AG04450 (cell line): ENCODE measurements at regions of chr10 and their contacts with region 1.

Region 1: DNA sequence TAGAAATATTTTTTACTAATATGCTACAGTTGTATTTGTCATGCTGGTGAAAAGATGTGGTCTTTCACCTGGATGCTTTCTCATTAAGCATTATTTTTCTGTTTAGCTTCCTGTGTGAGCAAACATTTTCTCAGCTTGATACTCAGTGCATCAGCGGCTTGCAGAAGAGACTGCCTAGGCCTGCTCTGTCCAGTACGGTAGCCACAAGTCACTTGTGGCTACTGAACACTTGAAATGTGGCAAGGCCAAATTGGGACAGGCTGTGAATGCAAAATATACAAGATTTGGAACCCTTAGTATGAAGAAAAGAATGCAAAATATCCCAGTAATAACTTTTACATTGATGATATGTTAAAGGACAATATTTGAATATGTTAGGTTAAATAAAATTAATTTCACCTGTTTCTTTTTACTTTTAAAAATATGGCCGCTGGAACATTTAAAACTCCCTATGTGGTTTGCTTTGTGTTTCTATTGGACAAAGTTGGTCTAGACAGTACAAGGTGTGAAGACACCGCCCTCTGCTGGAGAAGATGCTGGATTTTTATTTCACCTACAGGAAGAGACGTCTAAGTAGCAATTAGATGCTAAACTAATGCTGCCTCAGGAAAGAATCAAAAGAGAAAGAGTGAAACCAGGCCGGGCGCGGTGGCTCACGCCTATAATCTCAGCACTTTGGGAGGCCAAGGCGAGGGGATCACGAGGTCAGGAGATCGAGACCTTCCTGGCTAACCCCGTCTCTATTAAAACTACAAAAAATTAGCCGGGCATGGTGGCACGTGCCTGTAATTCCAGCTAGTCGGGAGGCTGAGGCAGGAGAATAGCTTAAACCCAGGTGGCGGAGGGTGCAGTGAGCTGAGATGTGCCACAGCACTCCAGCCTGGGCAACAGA is 5.3 kb downstream of the SRGN start:
- DNase-seq: peak; percentile 68
- H3K4me3 ChIP-seq: no peak overlapping the region
- H3K27ac ChIP-seq: no peak overlapping the region
- H3K27me3 ChIP-seq: no peaks in the 10 kb centered on the region
- CTCF ChIP-seq: peak; percentile 74

Region 2: DNA sequence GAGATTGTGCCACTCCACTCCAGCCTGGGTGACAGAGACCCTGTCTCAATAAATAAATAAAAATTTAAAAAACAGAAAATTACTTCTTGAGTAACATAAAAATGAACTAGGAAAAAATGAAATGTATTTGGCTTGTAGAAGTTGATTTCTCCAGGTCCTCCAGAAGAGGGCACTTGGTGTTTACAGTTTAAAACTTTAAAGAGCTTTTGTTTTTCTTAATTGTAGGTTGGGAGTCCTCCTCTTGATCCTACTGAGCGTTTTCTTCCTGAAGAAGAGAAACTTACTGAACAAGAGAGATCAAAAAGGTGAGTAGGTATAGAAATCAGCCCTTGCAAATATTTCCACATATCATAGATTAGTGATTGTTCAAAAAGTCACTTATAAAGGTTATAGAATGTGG is 88.4 kb before region 1 on chr10:
- CTCF ChIA-PET with region 1: interaction called, 138 read pairs
- POLR2A ChIA-PET with region 1: no interaction called
- DNase-seq: peak; percentile 24
- H3K4me3 ChIP-seq: no peak overlapping the region
- H3K27ac ChIP-seq: no peak overlapping the region
- H3K27me3 ChIP-seq: no peaks in the 10 kb centered on the region
- CTCF ChIP-seq: peak; percentile 63

Region 3: DNA sequence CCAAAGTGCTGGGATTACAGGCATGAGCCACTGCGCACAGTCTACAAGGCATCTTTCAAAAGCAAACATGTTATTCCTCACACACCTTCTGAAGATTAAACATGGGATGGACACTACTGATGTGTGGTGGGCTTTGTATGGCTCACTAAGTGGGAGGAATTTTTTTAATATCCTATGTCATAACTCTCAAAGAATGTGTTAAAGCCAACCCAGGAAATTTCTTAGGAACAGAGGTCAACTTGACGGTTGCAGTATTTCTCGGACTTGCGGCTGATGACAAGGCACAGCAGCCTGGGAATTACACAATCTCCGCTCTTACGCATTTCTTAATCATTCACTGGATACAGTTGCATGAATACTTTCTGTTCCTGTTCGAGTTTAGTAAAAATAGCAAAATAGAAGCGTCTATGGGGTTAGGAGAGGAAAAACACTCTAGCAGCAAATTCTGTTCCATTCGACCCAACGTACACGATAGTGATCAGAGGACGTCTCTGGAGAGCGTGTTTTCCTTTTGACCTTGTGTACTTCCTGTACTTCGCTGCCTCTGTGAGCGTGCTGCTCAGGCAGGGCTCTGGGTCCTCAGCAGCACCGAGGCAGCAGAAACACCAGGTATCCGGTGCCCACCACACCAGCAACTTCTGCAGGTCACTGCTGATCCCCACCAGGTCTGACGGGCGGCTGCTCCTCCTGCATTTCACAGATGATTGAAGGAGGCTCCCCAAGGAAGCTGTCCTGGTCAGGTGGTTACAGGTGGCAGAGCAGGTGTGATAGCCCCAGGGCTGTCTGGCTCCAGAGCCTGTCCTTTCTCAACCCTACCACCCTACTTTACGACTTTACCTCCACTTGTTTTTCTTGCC is 31.7 kb before region 1 on chr10:
- CTCF ChIA-PET with region 1: interaction called, 19 read pairs
- POLR2A ChIA-PET with region 1: no interaction called
- DNase-seq: peak; percentile 97
- H3K4me3 ChIP-seq: peak overlapping the region; percentile 54
- H3K27ac ChIP-seq: peak overlapping the region; percentile 100
- H3K27me3 ChIP-seq: no peaks in the 10 kb centered on the region
- CTCF ChIP-seq: no peak